ENCODE measurements at regions of chr13 and their contacts with region 1.

Region 1: DNA sequence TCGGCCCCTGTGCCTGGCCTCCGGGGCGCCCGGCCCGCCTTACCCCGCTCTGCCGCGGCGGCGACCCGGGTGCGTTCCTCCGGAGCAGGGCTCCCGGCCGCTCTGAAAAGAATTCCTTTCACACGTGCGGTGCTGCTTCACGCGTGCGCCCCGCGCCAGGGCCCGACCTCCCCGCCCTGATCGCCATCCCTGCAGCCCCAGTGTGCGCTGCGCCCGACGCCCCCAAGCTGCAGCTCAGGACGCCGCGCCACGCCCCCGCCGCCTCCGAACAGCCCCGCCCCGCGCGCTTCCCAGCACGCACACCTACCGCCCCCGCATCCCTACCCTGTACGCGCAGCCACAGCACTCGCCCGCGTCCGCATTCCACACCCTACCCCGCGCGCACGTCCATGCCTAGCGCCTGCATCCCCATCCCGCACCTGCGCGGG is at the start of gene GJA3:
- DNase-seq: no peak
- ATAC-seq: peak; percentile 33 to 61 (median 36)
- H3K4me3 ChIP-seq: peak within 1 kb of the TSS; percentile 55
- H3K27ac ChIP-seq: no peak within 1 kb of the TSS
- H3K4me1 ChIP-seq: no peaks in the 10 kb centered on the region
- H3K27me3 ChIP-seq: peaks cover 0 to 73% (median 21%) of the 10 kb centered on the region in 3 donors
- CTCF ChIP-seq: no peak
- total RNA-seq, gene GJA3: 0.06 TPM in 1 of 4 donors, not detected in the others

Region 2: GRCh38 chr13:19927117-19927748 is 233.6 kb before region 1 on chr13:
- intact Hi-C with region 1: loop called in 1 of 2 experiments (anchors 2 kb)
- DNase-seq: no peak
- ATAC-seq: peak in 2 of 4 donors; percentile 50 to 76
- H3K4me3 ChIP-seq: no peak overlapping the region
- H3K27ac ChIP-seq: no peak overlapping the region
- H3K4me1 ChIP-seq: no peaks in the 10 kb centered on the region
- H3K27me3 ChIP-seq: no peaks in the 10 kb centered on the region
- CTCF ChIP-seq: peak; percentile 56

Region 3: DNA sequence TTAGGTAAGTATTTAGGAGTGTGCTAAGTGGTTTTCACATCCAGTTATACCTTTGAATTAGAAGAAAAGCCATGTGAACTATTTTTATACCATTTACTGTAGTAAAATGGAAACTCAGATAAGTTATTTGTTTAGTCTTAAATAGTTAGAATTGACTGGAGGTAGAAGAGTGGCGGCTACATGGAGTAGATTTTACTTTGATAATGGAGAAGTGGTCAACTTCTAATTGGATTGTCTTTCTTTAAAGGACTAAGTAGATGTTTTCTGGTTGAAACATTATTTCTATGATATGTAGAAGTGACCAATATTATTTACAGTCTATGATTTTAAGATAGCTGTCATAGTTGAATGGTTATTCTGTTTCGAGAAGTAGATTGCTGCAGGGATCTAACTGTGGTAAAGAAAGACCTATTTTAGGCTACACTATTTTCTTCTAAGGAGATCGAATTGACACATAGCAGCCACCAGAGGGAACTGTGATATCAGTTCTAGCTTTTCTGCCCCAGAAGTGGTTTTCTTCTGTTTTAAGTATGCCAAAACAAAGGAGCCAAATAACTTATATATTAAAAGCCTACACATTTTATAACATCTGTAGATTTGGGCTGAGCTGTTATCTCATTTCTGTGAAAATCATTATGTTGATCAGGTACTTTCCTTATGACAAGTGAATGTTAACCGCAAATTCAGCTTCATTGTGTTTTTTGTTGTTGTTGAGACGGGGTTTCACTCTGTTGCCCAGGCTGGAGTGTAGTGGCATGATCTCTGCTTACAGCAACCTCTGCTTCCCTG is 176.2 kb before region 1 on chr13:
- intact Hi-C with region 1: loop called (anchors 10 kb)
- DNase-seq: no peak
- ATAC-seq: peak in 2 of 4 donors; percentile 60 to 78
- H3K4me3 ChIP-seq: no peak overlapping the region
- H3K27ac ChIP-seq: no peak overlapping the region
- H3K4me1 ChIP-seq: peaks cover 16% of the 10 kb centered on the region
- H3K27me3 ChIP-seq: no peaks in the 10 kb centered on the region
- CTCF ChIP-seq: peak; percentile 58

Region 4: GRCh38 chr13:20074966-20075365 is 85.9 kb before region 1 on chr13:
- intact Hi-C with region 1: no loop called
- DNase-seq: no peak
- ATAC-seq: no peak
- H3K4me3 ChIP-seq: no peak overlapping the region
- H3K27ac ChIP-seq: no peak overlapping the region
- H3K4me1 ChIP-seq: peaks cover 7% of the 10 kb centered on the region
- H3K27me3 ChIP-seq: no peaks in the 10 kb centered on the region
- CTCF ChIP-seq: no peak

Region 5: GRCh38 chr13:20090349-20090748 is 70.5 kb before region 1 on chr13:
- intact Hi-C with region 1: loop called (anchors 5 kb)
- DNase-seq: no peak
- ATAC-seq: peak in 2 of 4 donors; percentile 49 to 61
- H3K4me3 ChIP-seq: no peak overlapping the region
- H3K27ac ChIP-seq: no peak overlapping the region
- H3K4me1 ChIP-seq: no peaks in the 10 kb centered on the region
- H3K27me3 ChIP-seq: peaks cover 0 to 2% (median under 1%) of the 10 kb centered on the region in 3 donors
- CTCF ChIP-seq: no peak

Region 6: DNA sequence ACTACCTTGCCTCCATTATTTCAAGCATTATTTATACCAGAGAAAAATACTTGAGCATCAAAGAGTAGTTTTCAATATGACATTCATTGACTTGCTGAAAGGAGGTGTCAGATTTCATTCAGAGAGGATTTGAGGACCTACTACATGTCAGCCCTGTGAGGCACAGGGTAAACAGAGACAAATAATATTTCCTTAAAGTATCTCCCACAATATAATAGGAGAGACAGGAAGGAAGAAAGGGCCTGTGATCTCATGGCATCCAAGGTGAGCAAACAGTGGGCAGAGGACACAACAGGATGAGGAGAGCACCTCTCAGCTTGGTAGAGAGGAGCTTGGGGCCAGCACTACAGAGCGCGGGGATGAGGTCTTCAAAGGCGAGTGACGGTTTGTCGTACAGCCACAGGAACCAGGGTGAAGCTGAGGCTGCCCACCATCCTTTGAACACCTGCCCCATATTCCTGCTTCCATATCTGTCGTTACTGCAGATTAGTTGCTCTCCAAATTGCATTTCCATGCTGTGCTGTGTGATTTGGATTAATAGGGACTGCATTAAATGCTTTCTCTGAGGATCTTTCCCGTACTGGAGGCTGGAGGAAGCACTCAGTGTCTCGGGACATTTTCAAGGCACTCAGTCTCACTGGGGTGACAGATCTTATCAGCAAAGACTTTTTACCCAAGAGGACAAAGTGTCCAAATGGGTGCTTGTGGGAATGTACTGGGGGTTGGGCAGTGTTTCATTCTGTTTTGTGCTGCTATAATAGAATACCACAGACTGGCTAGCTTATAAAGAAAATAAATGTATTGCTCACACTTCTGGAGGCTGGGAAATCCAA is 59.2 kb before region 1 on chr13:
- intact Hi-C with region 1: no loop called
- DNase-seq: no peak
- ATAC-seq: no peak
- H3K4me3 ChIP-seq: no peak overlapping the region
- H3K27ac ChIP-seq: no peak overlapping the region
- H3K4me1 ChIP-seq: no peaks in the 10 kb centered on the region
- H3K27me3 ChIP-seq: peaks cover 0 to 31% (median 3%) of the 10 kb centered on the region in 3 donors
- CTCF ChIP-seq: no peak

Region 7: DNA sequence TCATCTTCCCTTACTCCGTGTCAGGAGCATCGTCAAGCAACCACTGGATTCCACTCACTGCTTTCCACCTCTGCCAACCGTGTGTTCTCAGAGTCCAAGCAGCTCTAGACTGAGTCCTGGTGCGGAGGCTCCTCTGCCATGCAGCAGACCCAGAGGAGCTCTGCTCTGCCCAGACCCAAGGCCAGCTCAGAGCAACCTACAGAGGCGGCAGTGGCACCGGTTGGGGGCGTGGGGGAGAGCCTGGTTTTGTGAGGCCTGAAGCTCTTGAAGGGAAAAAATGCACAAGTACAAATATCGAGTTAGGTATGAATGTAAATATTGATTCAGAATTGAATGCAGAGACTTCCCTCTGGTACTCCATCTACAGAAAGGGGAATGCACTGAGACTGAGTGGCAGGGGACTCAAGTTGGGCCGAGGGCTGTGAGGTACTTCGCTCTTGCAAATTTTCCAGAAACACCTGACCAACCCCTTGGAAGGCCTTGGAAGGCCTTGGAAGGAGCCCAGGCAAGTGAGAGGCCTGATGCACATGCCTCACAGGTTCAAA is 46.7 kb before region 1 on chr13:
- intact Hi-C with region 1: no loop called
- DNase-seq: no peak
- ATAC-seq: no peak
- H3K4me3 ChIP-seq: no peak overlapping the region
- H3K27ac ChIP-seq: no peak overlapping the region
- H3K4me1 ChIP-seq: peaks cover 4% of the 10 kb centered on the region
- H3K27me3 ChIP-seq: no peaks in the 10 kb centered on the region
- CTCF ChIP-seq: no peak

Region 8: DNA sequence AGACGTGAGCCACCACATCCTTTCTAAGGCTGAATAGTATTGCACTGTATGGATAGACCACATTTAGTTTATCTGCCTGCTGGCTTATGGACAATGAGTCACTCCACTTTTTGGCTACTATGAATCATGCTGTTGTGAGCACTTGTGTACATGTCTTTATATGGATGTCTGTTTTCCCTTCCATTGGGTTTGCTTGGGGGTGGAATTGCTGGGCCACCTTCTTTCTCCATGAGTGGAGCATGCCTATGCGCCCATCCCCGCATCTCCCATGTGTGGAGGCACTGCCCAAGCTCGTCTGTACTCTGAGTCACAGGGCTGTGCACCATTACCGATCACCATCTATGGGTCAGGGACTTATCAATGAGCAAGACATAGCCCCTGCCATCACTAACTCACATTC is 198.5 kb after region 1 on chr13:
- intact Hi-C with region 1: no loop called
- DNase-seq: no peak
- ATAC-seq: peak in 2 of 4 donors; percentile 24 to 25
- H3K4me3 ChIP-seq: no peak overlapping the region
- H3K27ac ChIP-seq: no peak overlapping the region
- H3K4me1 ChIP-seq: no peaks in the 10 kb centered on the region
- H3K27me3 ChIP-seq: peaks cover 0 to 4% (median 0%) of the 10 kb centered on the region in 3 donors
- CTCF ChIP-seq: no peak